CD8-positive, alpha-beta T cell (primary cell): ENCODE measurements at regions of chr19 and their contacts with region 1.

Region 1: GRCh38 chr19:17470068-17470841 is at the start of gene SLC27A1:
- DNase-seq: peak; percentile 77 to 96 (median 91)
- ATAC-seq: peak; percentile 74
- H3K4me3 ChIP-seq: peak within 1 kb of the TSS; percentile 62 to 86
- H3K4me3 Mint-ChIP-seq: peak within 1 kb of the TSS; percentile 93
- H3K27ac ChIP-seq: peak within 1 kb of the TSS; percentile 45 to 80
- H3K27ac Mint-ChIP-seq: peak within 1 kb of the TSS; percentile 89
- H3K4me1 ChIP-seq: peaks cover 22% of the 10 kb centered on the region
- H3K4me1 Mint-ChIP-seq: peaks cover 33% of the 10 kb centered on the region
- H3K27me3 ChIP-seq: no peaks in the 10 kb centered on the region
- H3K27me3 Mint-ChIP-seq: no peaks in the 10 kb centered on the region
- CTCF ChIP-seq: no peak
- total RNA-seq, gene SLC27A1: 8.1 to 9.4 TPM

Region 2: DNA sequence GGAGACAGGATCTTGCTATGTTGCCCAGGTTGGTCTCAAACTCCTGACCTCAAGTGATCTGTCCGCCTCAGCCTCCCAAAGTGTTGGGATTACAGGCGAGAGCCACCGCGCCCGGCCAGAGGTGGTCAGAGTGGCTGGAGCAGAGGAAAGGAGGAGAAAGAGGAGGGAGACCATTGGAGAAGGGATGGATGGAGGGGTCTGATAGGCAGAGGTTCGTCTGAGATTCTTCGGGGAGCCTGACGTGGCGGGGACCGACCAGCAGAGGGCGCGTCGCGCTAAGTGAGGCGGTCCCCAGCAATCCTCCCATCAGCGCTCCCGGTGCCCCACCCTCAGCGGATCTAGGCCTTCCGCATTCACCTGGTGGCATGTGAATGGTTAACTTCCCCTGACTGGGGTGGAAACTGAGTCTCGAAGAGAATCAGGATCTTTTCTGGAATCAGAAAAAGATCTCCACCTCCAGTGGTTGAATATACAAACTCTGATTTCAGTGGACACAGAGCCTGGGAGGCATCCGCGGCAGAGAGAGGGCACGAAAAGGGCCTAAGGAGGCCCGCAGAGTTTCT is 124.1 kb before region 1 on chr19:
- CTCF ChIA-PET with region 1: interaction called, 5 read pairs
- POLR2A ChIA-PET with region 1: no interaction called
- intact Hi-C with region 1: loop called (anchors 1 kb)
- DNase-seq: peak; percentile 57 to 87 (median 78)
- ATAC-seq: peak; percentile 99
- H3K4me3 ChIP-seq: no peak overlapping the region
- H3K4me3 Mint-ChIP-seq: no peak overlapping the region
- H3K27ac ChIP-seq: no peak overlapping the region
- H3K27ac Mint-ChIP-seq: no peak overlapping the region
- H3K4me1 ChIP-seq: no peaks in the 10 kb centered on the region
- H3K4me1 Mint-ChIP-seq: peaks cover 5% of the 10 kb centered on the region
- H3K27me3 ChIP-seq: peaks cover 0 to 5% of the 10 kb centered on the region in 2 experiments
- H3K27me3 Mint-ChIP-seq: peaks cover 8% of the 10 kb centered on the region
- CTCF ChIP-seq: peak; percentile 97

Region 3: DNA sequence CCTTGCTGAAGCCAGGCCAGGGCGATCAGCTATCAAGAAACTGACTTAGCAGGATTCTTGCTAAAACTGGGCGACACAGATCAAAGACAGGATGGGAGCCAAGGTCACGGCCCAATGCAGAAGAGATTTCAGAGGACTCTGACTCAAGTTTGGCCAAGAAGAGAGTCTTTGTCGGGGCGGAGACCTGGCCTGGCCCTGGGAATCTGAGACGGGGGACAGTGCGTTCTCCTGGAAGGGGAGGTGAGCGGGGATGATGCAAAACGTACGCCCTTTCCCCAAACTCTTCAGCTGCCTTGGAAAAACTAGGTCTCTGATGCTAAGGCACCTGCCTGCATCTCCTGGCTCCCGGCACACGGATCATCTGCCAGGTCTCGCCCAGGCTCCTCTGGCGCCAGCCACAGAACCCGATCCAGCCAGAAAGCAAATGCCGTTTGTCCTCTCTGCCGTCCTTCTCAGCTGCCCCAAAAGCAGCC is 40.6 kb before region 1 on chr19:
- CTCF ChIA-PET with region 1: interaction called, 10 read pairs
- POLR2A ChIA-PET with region 1: no interaction called
- intact Hi-C with region 1: no loop called
- DNase-seq: no peak
- ATAC-seq: no peak
- H3K4me3 ChIP-seq: no peak overlapping the region
- H3K4me3 Mint-ChIP-seq: no peak overlapping the region
- H3K27ac ChIP-seq: no peak overlapping the region
- H3K27ac Mint-ChIP-seq: no peak overlapping the region
- H3K4me1 ChIP-seq: peaks cover 3% of the 10 kb centered on the region
- H3K4me1 Mint-ChIP-seq: peaks cover 7% of the 10 kb centered on the region
- H3K27me3 ChIP-seq: no peaks in the 10 kb centered on the region
- H3K27me3 Mint-ChIP-seq: no peaks in the 10 kb centered on the region
- CTCF ChIP-seq: no peak

Region 4: GRCh38 chr19:17488593-17489391 is 18.5 kb after region 1 on chr19:
- CTCF ChIA-PET with region 1: interaction called, 42 read pairs
- POLR2A ChIA-PET with region 1: interaction called, 3 read pairs
- intact Hi-C with region 1: loop called (anchors 1 kb)
- DNase-seq: peak; percentile 54 to 89 (median 80)
- ATAC-seq: peak; percentile 84
- H3K4me3 ChIP-seq: peak overlapping the region; percentile 45 to 50
- H3K4me3 Mint-ChIP-seq: peak overlapping the region; percentile 84
- H3K27ac ChIP-seq: peak overlapping the region; percentile 65 to 83
- H3K27ac Mint-ChIP-seq: peak overlapping the region; percentile 95
- H3K4me1 ChIP-seq: peaks cover 42% of the 10 kb centered on the region
- H3K4me1 Mint-ChIP-seq: peaks cover 48% of the 10 kb centered on the region
- H3K27me3 ChIP-seq: no peaks in the 10 kb centered on the region
- H3K27me3 Mint-ChIP-seq: no peaks in the 10 kb centered on the region
- CTCF ChIP-seq: no peak

Region 5: GRCh38 chr19:17511724-17512573 is 41.7 kb after region 1 on chr19:
- CTCF ChIA-PET with region 1: interaction called, 3 read pairs
- POLR2A ChIA-PET with region 1: no interaction called
- intact Hi-C with region 1: loop called (anchors 1 kb)
- DNase-seq: peak; percentile 77 to 96 (median 89)
- ATAC-seq: peak; percentile 83
- H3K4me3 ChIP-seq: peak overlapping the region; percentile 68 to 96
- H3K4me3 Mint-ChIP-seq: peak overlapping the region; percentile 100
- H3K27ac ChIP-seq: peak overlapping the region; percentile 81 to 86
- H3K27ac Mint-ChIP-seq: peak overlapping the region; percentile 97
- H3K4me1 ChIP-seq: peaks cover 17% of the 10 kb centered on the region
- H3K4me1 Mint-ChIP-seq: peaks cover 36% of the 10 kb centered on the region
- H3K27me3 ChIP-seq: no peaks in the 10 kb centered on the region
- H3K27me3 Mint-ChIP-seq: no peaks in the 10 kb centered on the region
- CTCF ChIP-seq: no peak

Region 6: DNA sequence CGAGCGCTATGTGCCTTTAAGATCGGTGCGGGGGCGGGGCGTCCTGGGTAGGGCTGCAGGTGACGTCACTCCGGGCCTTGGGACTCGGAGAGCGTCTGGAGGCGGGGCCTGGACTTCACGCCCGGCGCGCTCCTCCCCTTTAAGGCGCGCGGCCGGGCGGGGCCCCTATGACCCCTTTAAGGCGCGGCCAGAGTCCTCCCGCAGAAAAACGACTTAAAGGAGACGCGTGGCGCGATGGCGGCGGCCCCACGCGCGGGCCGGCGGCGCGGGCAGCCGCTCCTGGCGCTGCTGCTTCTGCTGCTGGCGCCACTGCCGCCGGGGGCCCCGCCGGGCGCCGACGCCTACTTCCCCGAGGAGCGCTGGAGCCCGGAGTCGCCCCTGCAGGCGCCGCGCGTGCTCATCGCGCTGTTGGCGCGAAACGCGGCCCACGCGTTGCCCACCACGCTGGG is 85.2 kb after region 1 on chr19 and contains the start of gene COLGALT1:
- CTCF ChIA-PET with region 1: interaction called, 5 read pairs
- POLR2A ChIA-PET with region 1: no interaction called
- intact Hi-C with region 1: loop called (anchors 1 kb)
- DNase-seq: peak; percentile 93 to 99 (median 98)
- ATAC-seq: peak; percentile 100
- H3K4me3 ChIP-seq: peak within 1 kb of the TSS; percentile 80 to 84
- H3K4me3 Mint-ChIP-seq: peak within 1 kb of the TSS; percentile 82
- H3K27ac ChIP-seq: peak within 1 kb of the TSS; percentile 49 to 50
- H3K27ac Mint-ChIP-seq: peak within 1 kb of the TSS; percentile 27
- H3K4me1 ChIP-seq: peaks cover 18% of the 10 kb centered on the region
- H3K4me1 Mint-ChIP-seq: peaks cover 26% of the 10 kb centered on the region
- H3K27me3 ChIP-seq: no peaks in the 10 kb centered on the region
- H3K27me3 Mint-ChIP-seq: no peaks in the 10 kb centered on the region
- CTCF ChIP-seq: no peak
- total RNA-seq, gene COLGALT1: 22.7 to 26.3 TPM